Panc1 (cell line): ENCODE measurements at regions of chr2 and their contacts with region 1.

Region 1: DNA sequence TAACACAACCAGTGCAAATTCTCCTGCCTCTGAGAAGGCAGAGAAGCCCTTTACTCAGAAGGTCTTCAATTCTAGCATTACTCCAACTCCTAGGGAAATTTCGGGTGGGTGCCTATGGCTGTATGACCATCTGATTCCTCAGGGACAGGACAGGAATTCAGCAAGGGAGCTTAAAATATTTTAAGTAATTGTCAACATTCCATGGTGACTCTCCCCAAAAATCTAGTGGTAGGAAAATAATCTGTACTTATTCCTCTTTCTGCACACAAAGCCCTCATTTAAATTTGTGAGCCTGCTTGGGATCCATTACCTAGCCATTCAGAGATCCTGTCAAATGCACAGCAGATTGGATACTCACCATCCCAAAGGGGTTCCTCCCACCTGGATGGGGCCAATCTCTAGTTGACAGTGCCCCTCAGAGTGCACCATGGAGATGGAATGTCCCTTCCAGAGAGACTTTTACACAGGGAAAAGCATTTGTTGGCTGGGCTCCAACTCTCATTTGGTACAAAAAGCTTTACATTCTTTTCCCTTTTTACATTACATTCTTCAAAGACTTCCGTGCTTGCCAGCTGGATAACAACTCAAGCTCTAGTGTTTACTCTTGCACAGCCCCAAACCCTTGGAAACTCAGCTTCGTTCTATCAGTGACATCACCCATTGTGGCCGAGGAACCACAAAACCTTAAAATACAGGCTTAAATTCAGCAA is 3.1 kb upstream of the TMEM150A start:
- DNase-seq: no peak
- ATAC-seq: no peak
- H3K4me3 ChIP-seq: no peak overlapping the region
- H3K27ac ChIP-seq: no peak overlapping the region
- H3K4me1 ChIP-seq: peaks cover 19% of the 10 kb centered on the region
- H3K27me3 ChIP-seq: no peaks in the 10 kb centered on the region
- CTCF ChIP-seq: no peak

Region 2: DNA sequence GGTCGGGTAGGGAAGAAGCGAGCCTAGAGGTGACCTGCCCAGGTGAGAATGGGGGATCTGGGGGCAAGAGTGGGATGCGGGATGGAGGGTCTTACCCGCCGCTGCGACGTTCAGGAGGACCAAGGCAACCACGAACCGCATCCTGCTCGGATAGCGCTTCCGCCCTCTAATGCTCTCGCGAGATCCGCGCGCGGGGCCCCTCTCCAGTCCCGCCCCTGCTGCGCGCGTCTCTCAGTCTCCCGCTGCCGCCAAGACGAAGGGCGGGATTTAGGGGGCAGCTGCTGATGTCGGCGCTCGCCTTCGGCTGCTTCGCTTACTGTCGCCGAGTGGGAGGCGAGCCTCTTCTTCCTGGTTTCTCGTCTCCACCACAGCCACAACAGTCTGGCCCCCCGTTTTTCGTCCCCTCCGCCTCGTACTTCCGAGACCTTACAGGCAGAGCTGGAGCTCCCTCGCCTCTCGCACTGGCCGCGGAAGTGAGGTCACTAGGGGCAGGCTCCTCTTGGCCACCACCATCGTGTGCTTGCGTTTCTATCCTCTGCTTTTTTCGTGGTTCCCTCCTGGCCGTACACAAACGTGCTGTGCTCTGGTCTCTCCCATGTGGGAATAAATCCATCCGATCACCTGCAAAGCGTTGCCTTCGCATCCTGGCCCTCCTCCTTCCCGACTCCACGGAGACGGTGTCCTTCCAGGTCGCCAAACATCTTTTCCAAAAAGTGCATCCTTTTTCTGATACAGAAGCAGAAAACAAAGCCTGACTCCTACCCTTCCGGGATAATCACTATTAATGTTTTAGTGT is 277.5 kb before region 1 on chr2 and contains the start of gene TGOLN2:
- CTCF ChIA-PET with region 1: no interaction called
- POLR2A ChIA-PET with region 1: interaction called, 10 read pairs
- in situ Hi-C with region 1: no loop called
- intact Hi-C with region 1: no loop called
- DNase-seq: peak; percentile 79
- ATAC-seq: peak; percentile 99
- H3K4me3 ChIP-seq: peak within 1 kb of the TSS; percentile 83 to 88
- H3K27ac ChIP-seq: peak within 1 kb of the TSS; percentile 93
- H3K4me1 ChIP-seq: peaks cover 12% of the 10 kb centered on the region
- H3K27me3 ChIP-seq: no peaks in the 10 kb centered on the region
- CTCF ChIP-seq: no peak
- total RNA-seq, gene TGOLN2: 178 TPM

Region 3: DNA sequence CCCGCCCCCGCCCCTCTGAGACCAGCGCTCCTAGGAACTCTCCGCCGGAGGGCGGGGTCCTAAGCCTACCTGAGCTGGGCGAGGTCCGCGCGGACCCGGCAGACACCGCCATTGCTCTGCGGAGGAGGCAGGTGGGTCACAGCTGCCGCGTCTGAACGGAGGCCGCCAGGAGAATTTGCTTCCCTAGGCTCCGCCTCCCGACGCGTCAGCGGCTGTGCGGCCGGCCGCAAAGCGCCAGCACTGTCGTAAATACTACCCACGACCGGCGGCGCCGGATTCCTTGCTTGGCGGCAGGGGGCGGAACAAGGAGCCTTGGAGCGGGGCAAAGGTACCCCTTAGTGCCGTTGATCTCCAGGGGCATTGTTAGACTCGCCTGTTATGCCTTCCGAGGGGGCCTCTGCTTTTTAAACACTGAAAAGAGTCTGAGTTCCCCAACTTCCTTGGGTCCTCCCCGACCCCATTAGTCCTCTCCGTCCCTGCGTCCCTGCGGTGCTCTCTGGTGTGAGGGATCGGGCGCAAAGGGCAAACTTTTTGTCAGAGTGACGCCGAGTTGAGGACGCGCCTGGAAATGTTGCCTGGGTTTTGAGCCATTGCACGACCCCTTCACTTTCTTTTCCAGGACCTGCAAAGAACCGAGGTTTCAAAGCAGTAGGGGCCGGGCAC is 44.1 kb before region 1 on chr2 and contains the start of gene GGCX:
- CTCF ChIA-PET with region 1: no interaction called
- POLR2A ChIA-PET with region 1: no interaction called
- in situ Hi-C with region 1: no loop called
- intact Hi-C with region 1: loop called (anchors 2 kb)
- DNase-seq: no peak
- ATAC-seq: peak; percentile 97
- H3K4me3 ChIP-seq: peak within 1 kb of the TSS; percentile 71 to 95
- H3K27ac ChIP-seq: peak within 1 kb of the TSS; percentile 95
- H3K4me1 ChIP-seq: peaks cover 6% of the 10 kb centered on the region; the same call in 1 of the 2 replicates
- H3K27me3 ChIP-seq: no peaks in the 10 kb centered on the region
- CTCF ChIP-seq: no peak
- total RNA-seq, gene GGCX: 64.1 TPM

Region 4: GRCh38 chr2:85814802-85815550 is 209.4 kb after region 1 on chr2:
- CTCF ChIA-PET with region 1: no interaction called
- POLR2A ChIA-PET with region 1: no interaction called
- in situ Hi-C with region 1: no loop called
- intact Hi-C with region 1: no loop called
- DNase-seq: no peak
- ATAC-seq: peak; percentile 29
- H3K4me3 ChIP-seq: no peak overlapping the region
- H3K27ac ChIP-seq: no peak overlapping the region
- H3K4me1 ChIP-seq: no peaks in the 10 kb centered on the region
- H3K27me3 ChIP-seq: no peaks in the 10 kb centered on the region
- CTCF ChIP-seq: no peak